Natural killer cell (primary cell): ENCODE measurements at regions of chr5 and their contacts with region 1.

Region 1: GRCh38 chr5:140700177-140701144 is at the start of gene ZMAT2:
- DNase-seq: peak; percentile 89 to 98
- ATAC-seq: peak; percentile 98 to 100 (median 99)
- H3K4me3 ChIP-seq: peak within 1 kb of the TSS; percentile 65
- H3K4me3 Mint-ChIP-seq: peak within 1 kb of the TSS; percentile 87
- H3K27ac ChIP-seq: peak within 1 kb of the TSS; percentile 76
- H3K27ac Mint-ChIP-seq: peak within 1 kb of the TSS; percentile 94 to 97
- H3K4me1 ChIP-seq: peaks cover 15% of the 10 kb centered on the region
- H3K4me1 Mint-ChIP-seq: peaks cover 23 to 34% of the 10 kb centered on the region in 2 donors
- H3K27me3 ChIP-seq: no peaks in the 10 kb centered on the region
- H3K27me3 Mint-ChIP-seq: no peaks in the 10 kb centered on the region
- CTCF ChIP-seq: no peak
- total RNA-seq, gene ZMAT2: 47.0 to 50.4 (median 49.5) TPM

Region 2: DNA sequence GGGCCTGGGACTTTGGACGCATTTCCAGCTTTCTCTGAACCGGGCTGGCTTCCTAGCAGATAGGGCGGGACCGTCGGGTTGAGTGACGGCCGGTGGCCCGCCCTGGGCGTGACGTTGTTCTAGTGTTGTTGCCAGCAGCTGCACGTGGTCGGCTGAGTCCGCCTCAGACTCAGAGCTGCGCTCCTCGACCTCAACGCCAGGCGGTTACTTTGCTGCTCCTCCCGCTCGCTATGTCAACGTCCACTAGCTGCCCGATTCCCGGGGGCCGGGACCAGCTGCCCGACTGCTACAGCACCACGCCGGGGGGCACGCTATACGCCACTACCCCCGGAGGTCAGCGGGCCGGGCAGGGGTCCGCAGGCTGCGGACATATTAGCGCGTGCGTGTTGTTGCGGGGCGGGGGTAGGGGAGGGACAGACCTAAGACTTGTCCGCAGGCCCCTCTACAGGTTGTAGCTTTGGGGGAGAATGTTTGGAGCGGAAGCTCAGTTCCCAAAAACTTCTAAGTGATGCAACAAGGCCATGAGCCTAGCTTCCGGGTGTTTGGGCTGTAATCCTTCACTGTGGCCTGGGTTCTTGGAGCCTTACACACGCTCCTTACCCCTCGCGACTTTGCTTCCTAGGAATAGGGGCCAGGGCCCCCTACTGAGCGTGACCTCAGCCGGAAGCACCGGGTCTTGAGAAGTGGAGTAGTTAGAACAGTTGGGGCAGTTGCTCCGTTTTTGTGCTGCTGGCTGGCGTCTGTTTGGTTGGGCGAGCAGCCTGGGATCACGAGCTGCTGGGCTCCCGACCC is 152.8 kb before region 1 on chr5 and contains the start of gene EIF4EBP3:
- intact Hi-C with region 1: loop called (anchors 5 kb)
- DNase-seq: peak; percentile 89 to 95
- ATAC-seq: peak; percentile 97 to 99 (median 98)
- H3K4me3 ChIP-seq: peak within 1 kb of the TSS; percentile 60
- H3K4me3 Mint-ChIP-seq: peak within 1 kb of the TSS; percentile 86
- H3K27ac ChIP-seq: peak within 1 kb of the TSS; percentile 81
- H3K27ac Mint-ChIP-seq: peak within 1 kb of the TSS; percentile 87 to 95
- H3K4me1 ChIP-seq: peaks cover 30% of the 10 kb centered on the region
- H3K4me1 Mint-ChIP-seq: peaks cover 27 to 28% of the 10 kb centered on the region in 2 donors
- H3K27me3 ChIP-seq: no peaks in the 10 kb centered on the region
- H3K27me3 Mint-ChIP-seq: no peaks in the 10 kb centered on the region
- CTCF ChIP-seq: peak; percentile 65
- total RNA-seq, gene EIF4EBP3: 5.8 to 9.4 (median 6.0) TPM

Region 3: DNA sequence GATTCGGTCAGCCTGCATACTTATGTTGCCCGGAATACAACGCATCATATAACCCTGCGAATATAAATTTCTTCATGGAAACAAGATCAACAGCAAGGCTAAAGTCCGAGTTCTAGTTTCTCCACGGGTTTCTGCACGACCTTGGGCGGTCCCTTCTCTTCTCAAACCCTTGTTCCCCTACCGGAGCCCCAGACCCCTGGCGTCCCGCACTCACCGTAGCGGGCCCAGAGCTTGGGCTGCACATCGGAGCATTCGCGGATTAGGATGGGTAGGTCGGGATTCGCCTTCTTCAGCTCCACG is 53.5 kb before region 1 on chr5:
- intact Hi-C with region 1: loop called (anchors 1 kb)
- DNase-seq: no peak
- ATAC-seq: no peak
- H3K4me3 ChIP-seq: peak overlapping the region; percentile 78
- H3K4me3 Mint-ChIP-seq: peak overlapping the region; percentile 100
- H3K27ac ChIP-seq: peak overlapping the region; percentile 89
- H3K27ac Mint-ChIP-seq: peak overlapping the region; percentile 94 to 99
- H3K4me1 ChIP-seq: peaks cover 20% of the 10 kb centered on the region
- H3K4me1 Mint-ChIP-seq: peaks cover 31 to 46% of the 10 kb centered on the region in 2 donors
- H3K27me3 ChIP-seq: no peaks in the 10 kb centered on the region
- H3K27me3 Mint-ChIP-seq: no peaks in the 10 kb centered on the region
- CTCF ChIP-seq: no peak

Region 4: DNA sequence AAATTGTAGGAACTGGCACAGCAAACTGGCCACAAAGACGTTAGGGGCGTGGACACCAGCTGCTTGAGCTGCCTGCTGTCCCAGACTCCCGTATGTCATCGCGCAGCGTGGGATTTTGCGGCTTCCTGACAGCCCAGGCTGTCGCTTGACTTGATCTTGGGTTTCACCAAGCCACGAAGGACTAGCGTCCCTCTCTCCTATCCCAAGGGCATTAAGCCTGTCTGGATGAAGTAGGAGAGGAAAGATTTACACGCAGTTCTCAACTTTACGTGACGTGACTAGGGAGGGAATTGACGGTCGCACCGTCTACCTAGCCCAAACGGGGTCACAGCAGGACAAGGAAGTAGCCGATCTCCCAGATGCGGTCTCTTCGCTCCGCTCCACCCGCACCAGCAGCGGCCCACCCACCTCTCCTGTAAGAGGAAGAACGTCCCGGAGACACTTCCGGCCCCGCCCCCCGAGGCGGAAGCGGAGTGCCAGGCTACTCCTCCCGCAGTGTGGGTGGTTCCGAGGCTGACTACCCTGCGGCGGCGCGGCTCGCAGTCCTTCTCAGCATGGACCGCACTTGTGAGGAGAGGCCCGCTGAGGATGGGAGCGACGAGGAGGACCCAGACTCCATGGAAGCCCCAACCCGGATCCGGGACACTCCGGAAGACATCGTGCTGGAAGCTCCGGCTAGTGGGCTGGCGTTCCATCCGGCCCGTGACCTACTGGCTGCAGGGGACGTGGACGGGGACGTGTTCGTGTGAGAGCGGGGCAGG is 35.9 kb before region 1 on chr5 and contains the start of gene WDR55:
- intact Hi-C with region 1: loop called (anchors 1 kb)
- DNase-seq: peak; percentile 86 to 97
- ATAC-seq: peak; percentile 95 to 97 (median 95)
- H3K4me3 ChIP-seq: peak within 1 kb of the TSS; percentile 99
- H3K4me3 Mint-ChIP-seq: peak within 1 kb of the TSS; percentile 99
- H3K27ac ChIP-seq: peak within 1 kb of the TSS; percentile 90
- H3K27ac Mint-ChIP-seq: peak within 1 kb of the TSS; percentile 96
- H3K4me1 ChIP-seq: peaks cover 21% of the 10 kb centered on the region
- H3K4me1 Mint-ChIP-seq: peaks cover 33 to 38% of the 10 kb centered on the region in 2 donors
- H3K27me3 ChIP-seq: no peaks in the 10 kb centered on the region
- H3K27me3 Mint-ChIP-seq: no peaks in the 10 kb centered on the region
- CTCF ChIP-seq: no peak
- total RNA-seq, gene WDR55: 42.3 to 45.1 (median 43.3) TPM

Region 5: DNA sequence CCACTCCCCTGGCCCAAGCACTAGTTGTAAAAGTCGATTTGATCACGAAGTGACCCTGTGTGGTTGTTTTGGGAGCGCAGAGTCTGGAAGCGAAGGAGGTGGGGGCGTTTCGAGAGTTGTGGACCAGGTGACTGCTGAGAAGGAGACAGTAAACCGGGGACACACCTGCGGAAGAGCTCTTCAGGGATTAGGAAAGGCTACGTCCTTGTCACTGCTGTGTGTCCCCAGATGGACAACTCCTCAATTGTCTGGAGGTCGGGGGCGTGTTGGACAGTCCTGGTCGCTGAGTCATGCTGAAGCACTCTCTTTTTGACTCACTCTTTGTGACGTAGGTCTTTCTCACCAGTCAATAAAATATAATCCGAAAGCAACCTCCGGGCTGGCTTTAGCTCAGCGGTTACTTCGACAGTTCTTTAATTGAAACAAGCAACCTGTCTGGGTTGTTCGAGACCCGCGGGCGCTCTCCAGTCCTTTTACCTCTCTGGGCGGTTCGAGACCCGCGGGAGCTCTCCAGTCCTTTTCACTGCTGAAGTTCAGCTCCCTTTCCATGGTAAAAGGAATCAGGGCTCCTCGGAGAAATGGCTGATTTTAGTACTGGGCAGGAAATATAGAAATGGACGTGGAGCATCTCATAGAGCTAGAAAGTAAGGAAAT is 10.6 kb after region 1 on chr5:
- intact Hi-C with region 1: loop called (anchors 1 kb)
- DNase-seq: peak; percentile 77 to 95
- ATAC-seq: peak; percentile 85 to 93 (median 86)
- H3K4me3 ChIP-seq: peak overlapping the region; percentile 98
- H3K4me3 Mint-ChIP-seq: peak overlapping the region; percentile 100
- H3K27ac ChIP-seq: peak overlapping the region; percentile 91
- H3K27ac Mint-ChIP-seq: peak overlapping the region; percentile 99 to 100
- H3K4me1 ChIP-seq: peaks cover 9% of the 10 kb centered on the region
- H3K4me1 Mint-ChIP-seq: peaks cover 13 to 26% of the 10 kb centered on the region in 2 donors
- H3K27me3 ChIP-seq: no peaks in the 10 kb centered on the region
- H3K27me3 Mint-ChIP-seq: peaks cover 6 to 10% of the 10 kb centered on the region in 2 donors
- CTCF ChIP-seq: no peak

Region 6: GRCh38 chr5:141636413-141637122 is 936.1 kb after region 1 on chr5 and contains the starts of genes HDAC3 and RELL2:
- intact Hi-C with region 1: no loop called
- DNase-seq: peak; percentile 96
- ATAC-seq: peak; percentile 93 to 99 (median 95)
- H3K4me3 ChIP-seq: peak within 1 kb of the TSS; percentile 87
- H3K4me3 Mint-ChIP-seq: peak within 1 kb of the TSS; percentile 86
- H3K27ac ChIP-seq: peak within 1 kb of the TSS; percentile 69
- H3K27ac Mint-ChIP-seq: peak within 1 kb of the TSS; percentile 48 to 84
- H3K4me1 ChIP-seq: peaks cover 30% of the 10 kb centered on the region
- H3K4me1 Mint-ChIP-seq: peaks cover 22 to 36% of the 10 kb centered on the region in 2 donors
- H3K27me3 ChIP-seq: no peaks in the 10 kb centered on the region
- H3K27me3 Mint-ChIP-seq: no peaks in the 10 kb centered on the region
- CTCF ChIP-seq: no peak
- total RNA-seq, gene HDAC3: 66.0 to 85.7 (median 74.7) TPM
- total RNA-seq, gene RELL2: 5.7 to 6.6 (median 6.1) TPM